ENCODE measurements at regions of chr3 and their contacts with region 1.

Region 1: GRCh38 chr3:157618075-157618760 is 115.0 kb upstream of the VEPH1 start:
- DNase-seq: peak; percentile 41
- ATAC-seq: peak; percentile 84
- H3K4me3 ChIP-seq: no peak overlapping the region
- H3K27ac ChIP-seq: no peak overlapping the region
- H3K4me1 ChIP-seq: no peaks in the 10 kb centered on the region
- H3K27me3 ChIP-seq: peaks cover 2% of the 10 kb centered on the region; the same call in 1 of the 2 replicates
- CTCF ChIP-seq: peak; percentile 75; the same call in 1 of the 2 replicates

Region 2: GRCh38 chr3:158085358-158085757 is 467.1 kb after region 1 on chr3:
- CTCF ChIA-PET with region 1: no interaction called
- POLR2A ChIA-PET with region 1: no interaction called
- in situ Hi-C with region 1: no loop called
- intact Hi-C with region 1: loop called (anchors 10 kb)
- DNase-seq: no peak
- ATAC-seq: no peak
- H3K4me3 ChIP-seq: no peak overlapping the region
- H3K27ac ChIP-seq: no peak overlapping the region
- H3K4me1 ChIP-seq: no peaks in the 10 kb centered on the region
- H3K27me3 ChIP-seq: peaks cover 16% of the 10 kb centered on the region
- CTCF ChIP-seq: no peak

Region 3: DNA sequence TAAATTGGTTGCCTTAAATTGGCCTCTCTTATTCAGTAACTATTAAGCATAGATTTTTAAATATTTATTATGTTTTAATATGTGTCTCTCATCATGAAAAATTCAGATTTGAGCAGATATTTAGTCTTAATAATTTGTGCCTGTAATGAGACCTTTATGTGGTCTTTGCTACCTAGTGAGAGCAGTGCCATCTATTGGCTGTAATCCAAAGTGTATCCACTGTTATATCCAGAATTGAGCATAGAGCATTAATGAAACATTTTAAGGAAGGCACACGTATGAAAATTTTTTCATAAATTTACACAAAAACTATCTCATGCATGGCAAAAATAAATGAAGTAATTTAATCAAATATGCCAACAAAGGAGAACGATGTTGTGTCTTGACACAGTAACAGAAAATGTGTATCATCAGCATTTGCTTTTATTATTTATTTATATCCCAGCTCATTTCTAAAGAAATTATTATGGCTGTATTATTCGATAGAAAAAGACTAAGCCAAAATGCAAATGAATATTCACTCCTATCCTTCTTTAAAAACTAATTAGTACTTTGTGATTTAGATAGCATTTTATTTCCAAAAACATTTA is 695.2 kb after region 1 on chr3:
- CTCF ChIA-PET with region 1: no interaction called
- POLR2A ChIA-PET with region 1: no interaction called
- in situ Hi-C with region 1: no loop called
- intact Hi-C with region 1: loop called (anchors 10 kb)
- DNase-seq: peak; percentile 22
- ATAC-seq: peak; percentile 84
- H3K4me3 ChIP-seq: no peak overlapping the region
- H3K27ac ChIP-seq: no peak overlapping the region
- H3K4me1 ChIP-seq: no peaks in the 10 kb centered on the region
- H3K27me3 ChIP-seq: no peaks in the 10 kb centered on the region
- CTCF ChIP-seq: peak; percentile 66; the same call in 1 of the 2 replicates

Region 4: DNA sequence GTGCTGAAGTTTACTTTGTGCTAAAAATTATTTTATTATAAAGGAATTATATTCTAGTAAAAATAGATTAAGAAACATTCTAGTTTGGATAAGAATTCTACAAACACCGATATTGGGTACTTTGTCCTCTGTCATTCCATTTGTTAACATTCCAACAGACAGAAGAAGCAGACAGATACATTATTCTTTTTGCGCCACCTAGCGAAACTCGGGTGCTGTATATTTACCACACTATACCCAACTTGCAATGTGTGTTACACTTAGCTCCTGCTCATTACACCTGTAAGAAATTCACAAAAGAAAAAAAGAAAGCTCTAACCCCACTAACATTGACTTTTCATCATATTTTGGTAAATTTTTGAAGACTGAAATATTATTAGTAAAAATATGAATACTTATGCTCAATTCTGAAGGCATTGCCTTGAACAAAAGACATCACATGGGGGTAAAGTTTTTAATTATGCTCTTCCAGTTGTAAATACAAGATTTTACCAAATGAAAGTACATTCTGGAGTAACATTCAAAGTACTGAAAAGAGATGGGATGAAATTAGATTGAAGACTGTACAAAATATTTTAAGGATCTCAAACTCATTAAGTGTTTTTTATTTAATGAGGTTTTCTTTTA is 816.3 kb after region 1 on chr3:
- CTCF ChIA-PET with region 1: no interaction called
- POLR2A ChIA-PET with region 1: no interaction called
- in situ Hi-C with region 1: no loop called
- intact Hi-C with region 1: loop called (anchors 2 kb)
- DNase-seq: peak; percentile 63
- ATAC-seq: peak; percentile 98
- H3K4me3 ChIP-seq: no peak overlapping the region
- H3K27ac ChIP-seq: no peak overlapping the region
- H3K4me1 ChIP-seq: no peaks in the 10 kb centered on the region
- H3K27me3 ChIP-seq: no peaks in the 10 kb centered on the region
- CTCF ChIP-seq: peak; percentile 82; the same call in 1 of the 2 replicates

Region 5: DNA sequence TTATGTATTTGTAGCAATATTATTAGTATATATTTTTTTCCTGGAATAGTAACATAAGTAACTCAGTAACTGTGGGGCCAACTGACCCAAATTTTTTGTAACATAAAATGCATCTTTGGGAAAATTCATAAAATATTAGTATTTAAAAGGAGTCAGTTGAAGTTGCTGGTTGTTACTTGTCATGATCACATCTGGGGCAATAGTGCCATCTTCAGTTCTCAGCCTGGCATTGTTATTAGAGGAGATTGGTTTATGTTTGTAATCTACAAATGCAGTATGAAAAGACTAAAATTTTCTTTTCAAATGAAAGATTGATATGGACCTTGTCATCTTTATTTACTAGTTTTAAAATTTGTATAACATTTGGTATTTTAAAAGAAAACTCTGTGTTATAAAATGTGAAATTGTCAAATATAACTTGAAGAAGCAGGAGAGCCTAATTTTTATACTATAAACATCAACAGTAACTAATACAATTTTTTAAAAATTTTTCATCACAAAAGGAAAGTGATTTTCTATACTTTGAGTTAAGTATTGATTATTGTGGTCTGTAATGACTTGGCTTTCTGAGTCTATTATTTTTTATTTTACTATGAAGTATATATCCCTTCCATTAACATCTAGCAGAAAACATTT is 914.0 kb after region 1 on chr3:
- CTCF ChIA-PET with region 1: no interaction called
- POLR2A ChIA-PET with region 1: no interaction called
- in situ Hi-C with region 1: no loop called
- intact Hi-C with region 1: loop called (anchors 5 kb)
- DNase-seq: peak; percentile 32
- ATAC-seq: no peak
- H3K4me3 ChIP-seq: no peak overlapping the region
- H3K27ac ChIP-seq: no peak overlapping the region
- H3K4me1 ChIP-seq: no peaks in the 10 kb centered on the region
- H3K27me3 ChIP-seq: no peaks in the 10 kb centered on the region
- CTCF ChIP-seq: peak; percentile 75; the same call in 1 of the 2 replicates

Region 6: GRCh38 chr3:159236321-159236720 is 1618.1 kb after region 1 on chr3:
- CTCF ChIA-PET with region 1: no interaction called
- POLR2A ChIA-PET with region 1: no interaction called
- in situ Hi-C with region 1: no loop called
- intact Hi-C with region 1: no loop called
- DNase-seq: no peak
- ATAC-seq: no peak
- H3K4me3 ChIP-seq: no peak overlapping the region
- H3K27ac ChIP-seq: no peak overlapping the region
- H3K4me1 ChIP-seq: no peaks in the 10 kb centered on the region
- H3K27me3 ChIP-seq: no peaks in the 10 kb centered on the region
- CTCF ChIP-seq: no peak